ENCODE measurements at regions of chr11 and their contacts with region 1.

Region 1: DNA sequence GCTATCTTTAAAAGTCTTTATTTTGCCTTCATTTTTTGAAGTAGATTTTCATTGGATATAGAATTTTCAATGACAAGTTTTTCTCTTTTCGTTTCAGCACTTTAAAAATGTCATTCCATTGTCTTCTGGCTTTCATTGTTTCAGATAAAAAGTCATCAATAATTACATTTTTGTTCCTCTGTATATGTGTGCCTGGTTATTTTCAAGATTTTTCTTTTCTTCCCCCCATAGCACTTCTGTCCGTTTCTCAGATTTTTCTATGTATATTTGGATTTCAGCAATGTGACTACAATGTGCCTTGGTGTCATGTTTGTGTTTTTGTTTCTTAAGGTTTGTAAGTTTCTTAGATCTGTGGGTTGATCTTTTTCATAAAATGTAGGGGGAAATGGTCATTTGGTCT is 66.3 kb upstream of the HSD17B12 start:
- DNase-seq: no peak

Region 2: GRCh38 chr11:43639920-43640319 is 25.7 kb after region 1 on chr11:
- intact Hi-C with region 1: loop called in 1 of 2 experiments (anchors 1 kb)
- DNase-seq: no peak

Region 3: DNA sequence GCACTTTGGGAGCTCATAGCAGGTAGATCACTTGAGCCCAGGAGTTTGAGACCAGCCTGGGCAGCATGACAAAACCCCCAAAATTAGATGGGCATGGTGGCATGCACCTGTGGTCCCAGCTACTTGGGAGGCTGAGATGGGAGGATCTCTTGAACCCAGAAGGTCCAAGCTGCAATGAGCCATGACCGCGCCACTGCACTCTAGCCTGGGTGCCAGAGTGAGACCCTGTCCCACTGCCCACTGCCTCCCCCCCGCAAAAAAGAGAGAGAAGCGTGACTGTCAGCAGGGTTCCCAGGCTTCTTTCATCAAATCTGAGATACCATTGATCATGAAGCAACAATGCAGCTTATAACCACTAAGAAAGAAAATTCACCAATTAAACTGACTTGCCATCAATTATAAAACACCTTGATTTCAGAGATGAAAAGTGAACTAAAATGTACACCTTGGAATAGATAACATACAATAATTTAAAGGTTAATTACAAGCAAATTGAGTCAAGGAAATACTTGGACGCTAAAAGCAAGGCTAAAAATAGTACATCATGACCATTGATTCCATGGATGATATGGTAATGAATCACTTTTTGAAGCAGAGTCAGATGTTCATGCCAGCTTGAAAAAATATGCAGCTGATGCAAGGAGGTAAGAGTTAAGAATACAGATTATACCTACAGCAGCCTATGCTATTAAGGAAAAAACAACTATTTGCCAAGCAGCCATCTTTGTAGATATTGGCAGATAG is 175.7 kb after region 1 on chr11:
- intact Hi-C with region 1: loop called in 1 of 2 experiments (anchors 10 kb)
- DNase-seq: peak; percentile 67